Ovary (tissue), 10 donors: ENCODE measurements at regions of chr2 and their contacts with region 1.

Region 1: DNA sequence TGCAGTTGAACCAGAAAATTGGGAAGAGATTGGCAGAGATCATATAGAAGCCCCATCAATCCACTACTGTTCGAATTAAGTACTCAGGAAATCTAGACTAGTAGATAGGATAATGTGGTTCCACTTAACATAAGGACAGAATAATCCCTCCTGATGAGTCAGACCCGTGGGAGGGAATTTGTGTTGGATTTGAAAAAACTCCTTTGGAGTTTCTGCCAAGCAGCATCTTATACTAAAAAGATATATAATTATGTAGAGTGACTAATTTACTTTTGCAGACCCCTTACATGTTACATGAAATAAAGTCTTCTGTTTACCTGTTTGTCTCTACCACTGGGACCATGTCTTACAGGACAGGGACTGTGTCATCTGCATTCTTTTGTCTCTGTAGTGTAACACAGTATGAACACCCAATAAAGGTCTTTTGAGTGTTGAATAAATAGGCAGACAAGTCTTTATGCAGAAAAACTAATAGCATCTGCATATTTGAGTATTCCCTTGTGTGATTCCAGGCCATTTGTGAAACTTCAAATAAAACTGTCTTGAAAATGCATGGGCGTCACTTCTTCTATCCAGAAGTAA is 122.6 kb upstream of the DNAJC10 start:
- DNase-seq: no peak
- H3K4me3 ChIP-seq: no peak overlapping the region
- H3K27ac ChIP-seq: no peak overlapping the region
- H3K4me1 ChIP-seq: no peaks in the 10 kb centered on the region
- H3K27me3 ChIP-seq: peaks cover 3% of the 10 kb centered on the region
- CTCF ChIP-seq: no peak
- EP300 ChIP-seq: no peak
- POLR2A ChIP-seq: no peak

Region 2: GRCh38 chr2:182066400-182067087 is 526.9 kb before region 1 on chr2:
- intact Hi-C with region 1: no loop called
- DNase-seq: no peak
- H3K4me3 ChIP-seq: no peak overlapping the region
- H3K27ac ChIP-seq: no peak overlapping the region
- H3K4me1 ChIP-seq: no peaks in the 10 kb centered on the region
- H3K27me3 ChIP-seq: no peaks in the 10 kb centered on the region
- CTCF ChIP-seq: no peak
- EP300 ChIP-seq: no peak
- POLR2A ChIP-seq: no peak

Region 3: DNA sequence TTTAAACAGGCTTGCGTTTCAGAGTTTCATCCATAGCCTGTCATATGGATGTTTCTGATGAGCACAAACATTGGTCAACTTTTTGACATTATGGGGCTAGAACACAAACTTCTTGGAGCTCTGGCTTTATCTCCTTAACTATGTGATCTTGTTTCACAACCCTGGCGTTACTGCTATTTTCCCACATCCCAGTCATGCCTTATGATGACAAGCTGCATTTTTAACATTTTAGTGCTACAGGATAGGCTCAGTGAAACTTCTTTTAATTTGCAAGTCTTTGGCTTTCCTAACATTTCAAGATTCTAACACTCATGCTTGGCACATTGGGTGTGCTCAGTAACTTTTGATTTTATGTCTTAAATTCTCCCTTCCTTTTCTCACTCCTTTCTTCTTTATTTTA is 145.6 kb before region 1 on chr2:
- intact Hi-C with region 1: no loop called
- DNase-seq: no peak
- H3K4me3 ChIP-seq: no peak overlapping the region
- H3K27ac ChIP-seq: no peak overlapping the region
- H3K4me1 ChIP-seq: no peaks in the 10 kb centered on the region
- H3K27me3 ChIP-seq: no peaks in the 10 kb centered on the region
- CTCF ChIP-seq: no peak
- EP300 ChIP-seq: no peak
- POLR2A ChIP-seq: no peak

Region 4: GRCh38 chr2:182636695-182637094 is 43.2 kb after region 1 on chr2:
- intact Hi-C with region 1: loop called in 2 of 4 experiments (anchors 1 to 10 kb)
- DNase-seq: no peak
- H3K4me3 ChIP-seq: no peak overlapping the region
- H3K27ac ChIP-seq: no peak overlapping the region
- H3K4me1 ChIP-seq: no peaks in the 10 kb centered on the region
- H3K27me3 ChIP-seq: no peaks in the 10 kb centered on the region
- CTCF ChIP-seq: no peak
- EP300 ChIP-seq: no peak
- POLR2A ChIP-seq: no peak

Region 5: DNA sequence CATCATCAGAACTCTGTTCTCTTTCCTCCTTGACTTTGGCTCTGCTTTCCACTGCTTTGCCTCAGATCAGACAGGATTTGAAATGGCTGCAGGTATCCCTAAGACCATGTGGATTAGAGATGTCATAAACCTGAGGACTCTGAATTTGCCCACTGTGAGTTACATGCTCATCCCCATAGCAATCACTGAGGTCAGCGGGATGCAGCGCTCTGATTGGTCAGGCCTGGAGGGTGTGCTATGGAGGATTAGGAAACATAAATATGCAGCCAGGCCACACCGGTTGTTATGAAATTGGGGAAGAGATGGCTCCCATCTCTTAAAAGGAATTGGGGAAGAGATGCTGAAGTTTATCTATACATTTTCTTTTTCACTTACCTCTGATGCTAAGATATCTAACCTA is 48.8 kb after region 1 on chr2:
- intact Hi-C with region 1: loop called in 1 of 4 experiments (anchors 10 kb)
- DNase-seq: peak in 2 of 5 donors; percentile 17 to 31
- H3K4me3 ChIP-seq: no peak overlapping the region
- H3K27ac ChIP-seq: no peak overlapping the region
- H3K4me1 ChIP-seq: no peaks in the 10 kb centered on the region
- H3K27me3 ChIP-seq: no peaks in the 10 kb centered on the region
- CTCF ChIP-seq: no peak
- EP300 ChIP-seq: no peak
- POLR2A ChIP-seq: no peak

Region 6: GRCh38 chr2:182655750-182656149 is 62.3 kb after region 1 on chr2:
- intact Hi-C with region 1: no loop called
- DNase-seq: no peak
- H3K4me3 ChIP-seq: no peak overlapping the region
- H3K27ac ChIP-seq: no peak overlapping the region
- H3K4me1 ChIP-seq: no peaks in the 10 kb centered on the region
- H3K27me3 ChIP-seq: no peaks in the 10 kb centered on the region
- CTCF ChIP-seq: no peak
- EP300 ChIP-seq: no peak
- POLR2A ChIP-seq: no peak

Region 7: DNA sequence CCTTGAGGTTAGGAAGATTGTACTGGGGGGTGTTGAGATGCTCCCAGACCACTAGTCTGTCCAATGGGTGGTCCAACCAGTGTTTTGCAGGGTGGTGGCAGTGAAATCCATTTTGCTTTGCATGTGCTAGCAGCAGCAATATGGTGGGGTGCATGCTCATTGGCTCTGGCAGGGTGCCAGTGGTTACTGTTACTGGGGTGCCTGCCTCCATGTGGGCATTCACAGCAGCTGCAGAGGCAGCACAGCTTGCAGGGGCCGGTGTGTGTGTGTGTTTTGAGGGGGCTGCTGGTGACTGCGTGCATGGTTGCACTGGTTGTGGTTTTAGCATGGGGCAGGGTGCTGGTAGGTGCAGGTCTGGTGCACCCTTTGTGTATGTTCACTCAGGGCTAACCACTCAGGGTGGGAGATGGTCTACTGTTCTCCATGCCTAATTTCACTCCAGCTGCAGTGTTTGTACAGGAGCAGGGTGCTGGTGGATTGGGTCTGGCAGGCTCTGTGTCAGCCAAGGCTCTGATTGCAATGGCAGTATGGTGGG is 796.1 kb after region 1 on chr2:
- intact Hi-C with region 1: no loop called
- DNase-seq: no peak
- H3K4me3 ChIP-seq: no peak overlapping the region
- H3K27ac ChIP-seq: no peak overlapping the region
- H3K4me1 ChIP-seq: no peaks in the 10 kb centered on the region
- H3K27me3 ChIP-seq: no peaks in the 10 kb centered on the region
- CTCF ChIP-seq: no peak
- EP300 ChIP-seq: no peak
- POLR2A ChIP-seq: no peak